Common myeloid progenitor, CD34-positive (primary cell): ENCODE measurements at regions of chr17 and their contacts with region 1.

Region 1: DNA sequence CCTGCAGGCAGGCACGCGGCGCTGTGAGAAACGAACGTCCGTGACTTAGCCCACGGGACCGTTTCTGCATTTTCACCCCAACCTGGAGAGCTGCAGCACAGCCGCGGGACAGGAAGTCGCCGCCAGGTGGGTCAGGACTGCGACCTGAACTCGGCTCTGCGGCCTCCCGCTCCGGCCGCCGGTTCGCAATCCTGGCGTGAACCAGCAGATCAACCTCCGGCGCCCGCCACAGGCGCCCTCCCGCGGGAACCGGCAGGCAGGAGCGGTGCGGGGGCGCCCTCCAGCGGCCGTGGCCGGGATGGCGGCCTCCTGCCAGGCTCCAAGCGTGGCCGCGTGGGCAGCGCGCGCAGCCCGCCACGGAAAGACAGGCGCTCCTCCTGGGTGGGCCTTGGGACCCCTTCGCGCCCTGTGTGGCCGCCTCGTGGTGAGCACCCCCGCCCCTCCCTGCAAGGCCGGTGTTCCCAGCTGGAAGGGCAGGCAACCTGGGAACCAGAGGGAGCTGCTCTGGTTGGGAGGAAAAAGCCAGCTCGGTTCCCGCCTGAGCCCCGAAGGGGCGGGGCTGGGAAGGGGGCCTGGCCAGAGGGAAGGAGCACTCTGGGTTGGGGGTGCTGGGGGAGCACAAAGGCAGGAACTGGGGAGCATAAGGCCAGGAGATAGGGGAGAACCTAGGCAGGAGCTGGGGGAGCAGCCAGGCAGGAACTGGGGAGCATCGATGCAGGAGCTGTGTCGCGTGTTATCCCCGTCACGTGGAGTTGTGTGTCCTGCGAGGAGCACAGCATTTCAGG is 28.2 kb downstream of the ACTG1 start:
- DNase-seq: peak; percentile 83 to 89 (median 89)
- H3K4me3 ChIP-seq: peak overlapping the region in 5 of 7 experiments; percentile 34 to 64 (median 59)
- H3K27ac ChIP-seq: no peak overlapping the region
- H3K4me1 ChIP-seq: peaks cover 4 to 92% (median 73%) of the 10 kb centered on the region in 4 experiments
- H3K27me3 ChIP-seq: no peaks in the 10 kb centered on the region

Region 2: DNA sequence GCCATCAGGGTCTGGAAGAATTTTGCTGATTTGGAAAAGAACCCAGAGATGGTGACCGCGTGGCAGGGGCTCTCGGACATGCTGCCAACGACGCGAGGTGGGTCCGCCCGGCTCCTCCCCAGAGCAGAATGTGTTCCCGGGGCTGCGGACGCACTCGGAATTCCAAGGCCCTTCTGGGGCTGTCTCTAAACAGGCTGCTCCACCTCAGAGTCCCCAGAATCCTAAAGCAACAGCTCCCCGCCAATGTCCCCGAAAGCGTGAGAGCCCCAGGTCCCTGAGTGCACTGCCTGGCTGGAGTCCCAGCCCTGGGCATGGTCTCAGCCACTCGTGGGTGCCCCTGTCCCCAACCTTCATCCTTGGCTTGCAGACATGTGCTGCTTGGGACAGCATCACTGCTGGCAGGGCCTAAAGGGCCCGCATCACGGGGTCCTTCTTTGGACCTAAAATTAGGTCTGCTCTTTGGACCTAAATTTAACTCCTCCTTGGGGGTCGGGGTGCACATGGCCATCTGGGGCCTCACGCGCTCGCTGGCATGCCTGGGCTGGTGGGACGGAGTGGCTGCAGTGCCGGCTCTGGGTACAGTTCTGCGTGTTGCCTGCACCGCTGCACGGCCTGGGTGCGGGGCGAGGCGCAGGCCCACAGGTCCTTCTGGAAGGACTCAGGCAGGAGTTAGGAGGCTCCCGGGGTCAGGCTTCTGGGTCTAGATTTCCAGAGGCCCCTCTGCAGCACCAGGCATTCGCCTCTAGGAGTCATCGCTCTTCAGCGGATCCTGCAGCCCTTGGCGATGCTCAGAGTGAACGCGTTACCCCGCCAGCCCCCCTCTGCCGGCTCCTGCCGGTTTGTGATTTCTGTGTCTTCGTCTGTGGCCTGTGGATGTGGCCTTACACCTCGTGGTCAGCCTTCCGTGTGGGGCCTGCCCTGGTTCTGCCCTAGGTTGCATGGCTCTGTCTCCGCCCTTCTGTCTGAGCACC is 534.7 kb before region 1 on chr17:
- CTCF ChIA-PET with region 1: no interaction called
- POLR2A ChIA-PET with region 1: no interaction called
- DNase-seq: no peak
- H3K4me3 ChIP-seq: no peak overlapping the region
- H3K27ac ChIP-seq: no peak overlapping the region
- H3K4me1 ChIP-seq: no peaks in the 10 kb centered on the region
- H3K27me3 ChIP-seq: no peaks in the 10 kb centered on the region

Region 3: DNA sequence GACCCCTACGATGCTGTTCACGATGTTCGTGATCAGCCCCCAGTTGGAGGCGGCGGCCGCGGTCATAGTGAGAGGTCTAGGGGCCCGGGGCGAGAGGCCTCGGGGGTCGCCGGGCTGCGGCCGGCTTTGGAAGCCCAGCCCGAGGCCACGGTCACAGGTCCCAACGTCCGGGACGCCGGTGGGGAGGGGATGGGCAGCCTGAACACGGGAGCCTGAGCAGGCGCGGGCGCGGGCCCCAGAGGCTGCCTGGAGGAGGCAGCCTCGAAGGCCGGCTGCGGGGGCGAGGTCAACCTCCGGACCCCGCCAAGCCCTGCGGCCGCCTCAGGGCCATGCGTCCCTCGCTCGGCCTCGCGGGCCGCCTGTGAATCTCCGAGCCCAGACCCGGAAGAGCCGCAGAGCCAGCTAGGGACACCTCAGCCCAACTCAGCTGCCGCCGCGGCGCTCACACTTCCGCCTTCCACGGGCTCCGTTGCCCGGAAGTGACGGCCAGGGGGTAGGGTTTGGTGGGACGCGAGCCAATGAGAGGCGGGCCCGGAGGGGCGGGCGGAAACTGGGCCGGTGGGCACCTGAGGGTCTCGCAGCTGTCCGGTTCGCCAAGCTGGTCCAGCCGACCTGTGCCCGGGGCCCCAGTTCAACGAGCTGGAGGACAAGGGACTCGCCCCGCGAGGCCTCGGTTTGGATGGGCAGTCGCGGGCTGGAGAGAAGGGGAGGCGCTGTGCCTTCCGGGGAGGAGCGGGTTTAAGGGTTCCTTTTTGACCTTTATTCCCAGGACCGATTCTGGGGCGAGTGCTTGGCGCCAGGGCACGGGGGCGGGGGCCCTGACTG is 189.3 kb before region 1 on chr17 and contains the start of gene SLC38A10:
- CTCF ChIA-PET with region 1: interaction called, 19 read pairs
- POLR2A ChIA-PET with region 1: interaction called, 4 read pairs
- DNase-seq: peak; percentile 87 to 92 (median 91)
- H3K4me3 ChIP-seq: peak within 1 kb of the TSS; percentile 68 to 97 (median 92)
- H3K27ac ChIP-seq: peak within 1 kb of the TSS; percentile 75 to 93
- H3K4me1 ChIP-seq: peaks cover 2 to 38% (median 20%) of the 10 kb centered on the region in 4 experiments
- H3K27me3 ChIP-seq: no peaks in the 10 kb centered on the region

Region 4: GRCh38 chr17:81371910-81372760 is 112.3 kb before region 1 on chr17:
- CTCF ChIA-PET with region 1: interaction called, 25 read pairs
- POLR2A ChIA-PET with region 1: no interaction called
- DNase-seq: peak; percentile 38 to 64 (median 63)
- H3K4me3 ChIP-seq: no peak overlapping the region
- H3K27ac ChIP-seq: no peak overlapping the region
- H3K4me1 ChIP-seq: peaks cover 0 to 6% (median under 1%) of the 10 kb centered on the region in 4 experiments
- H3K27me3 ChIP-seq: no peaks in the 10 kb centered on the region

Region 5: GRCh38 chr17:81412490-81413093 is 71.8 kb before region 1 on chr17:
- CTCF ChIA-PET with region 1: interaction called, 12 read pairs
- POLR2A ChIA-PET with region 1: interaction called, 3 read pairs
- DNase-seq: peak; percentile 71 to 92 (median 89)
- H3K4me3 ChIP-seq: peak overlapping the region in 3 of 7 experiments; percentile 36 to 53 (median 48)
- H3K27ac ChIP-seq: no peak overlapping the region
- H3K4me1 ChIP-seq: peaks cover 2 to 65% (median 43%) of the 10 kb centered on the region in 4 experiments
- H3K27me3 ChIP-seq: no peaks in the 10 kb centered on the region

Region 6: GRCh38 chr17:81440876-81441244 is 43.5 kb before region 1 on chr17:
- CTCF ChIA-PET with region 1: interaction called, 13 read pairs
- POLR2A ChIA-PET with region 1: interaction called, 7 read pairs
- DNase-seq: peak in 2 of 3 donors; percentile 57 to 62
- H3K4me3 ChIP-seq: no peak overlapping the region
- H3K27ac ChIP-seq: no peak overlapping the region
- H3K4me1 ChIP-seq: peaks cover 0 to 54% (median 49%) of the 10 kb centered on the region in 4 experiments
- H3K27me3 ChIP-seq: no peaks in the 10 kb centered on the region

Region 7: DNA sequence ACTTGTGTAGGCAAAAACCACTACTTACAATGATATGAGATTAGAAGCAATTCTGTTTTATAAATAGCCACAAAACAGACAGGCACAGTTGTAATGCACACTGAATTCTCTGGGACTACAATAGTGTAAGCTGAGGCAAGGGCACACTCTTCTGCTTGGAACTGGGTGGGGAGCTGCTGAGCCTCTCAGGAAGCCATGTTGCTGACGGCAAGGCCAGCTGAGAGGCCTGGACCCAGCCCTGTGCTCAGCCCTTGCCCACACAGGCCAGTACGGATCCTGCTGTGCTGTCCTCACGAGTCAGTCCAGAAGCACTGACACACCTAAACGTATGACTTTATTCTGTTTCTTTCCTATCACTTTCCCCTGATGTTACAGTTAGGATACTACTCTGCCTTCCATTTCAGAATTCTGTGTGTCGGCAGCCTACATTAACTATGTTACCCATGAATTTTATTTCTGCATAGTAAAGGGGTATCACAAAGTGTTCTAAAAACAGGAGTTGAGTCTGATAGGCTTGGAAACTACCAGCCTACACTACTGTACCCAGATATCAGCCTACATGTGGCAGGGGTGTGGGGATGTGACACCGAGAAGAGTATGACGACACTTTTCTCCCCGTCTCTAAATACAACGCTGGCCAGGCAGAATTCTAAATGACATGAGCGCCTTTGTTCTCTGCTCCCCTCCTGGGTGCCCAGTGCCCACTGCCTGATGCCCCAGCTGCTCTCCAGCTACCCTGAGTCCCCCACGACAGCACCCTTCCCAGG is 108.9 kb after region 1 on chr17:
- CTCF ChIA-PET with region 1: no interaction called
- POLR2A ChIA-PET with region 1: no interaction called
- DNase-seq: no peak
- H3K4me3 ChIP-seq: no peak overlapping the region
- H3K27ac ChIP-seq: no peak overlapping the region
- H3K4me1 ChIP-seq: no peaks in the 10 kb centered on the region
- H3K27me3 ChIP-seq: no peaks in the 10 kb centered on the region